Panc1 (cell line): ENCODE measurements at regions of chr2 and their contacts with region 1.

Region 1: DNA sequence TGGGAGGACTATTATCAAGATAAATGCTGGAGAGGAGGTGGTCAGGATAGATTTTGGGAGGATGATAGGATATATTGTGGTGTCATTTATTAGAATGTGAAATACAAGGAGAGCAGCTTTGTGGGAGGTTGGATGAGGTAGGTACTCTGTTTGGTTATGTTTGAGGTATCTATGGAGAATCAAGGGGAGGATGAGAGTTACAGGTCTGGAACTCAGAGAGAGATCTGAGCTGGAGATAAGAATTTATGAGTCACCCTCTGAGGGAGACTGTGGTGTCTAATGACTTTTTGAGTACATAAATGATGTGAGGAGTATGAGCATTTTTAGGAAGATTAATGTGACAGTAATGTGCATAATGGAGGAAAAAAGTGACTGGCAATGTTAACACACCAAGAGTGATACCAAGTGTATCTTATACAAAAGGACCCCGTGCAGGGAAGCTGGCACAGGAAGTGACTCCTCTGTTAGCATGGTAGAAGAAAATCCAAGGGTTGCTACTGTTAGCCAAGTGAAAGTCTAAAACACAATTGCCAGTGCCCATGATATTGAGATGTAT is 48.2 kb downstream of the CRIM1 start:
- DNase-seq: peak; percentile 93
- ATAC-seq: peak; percentile 82
- H3K4me3 ChIP-seq: peak overlapping the region in 1 of 2 experiments; percentile 4; a peak in 2 of 4 replicates
- H3K27ac ChIP-seq: peak overlapping the region; percentile 96
- H3K4me1 ChIP-seq: peaks cover 100% of the 10 kb centered on the region
- H3K27me3 ChIP-seq: no peaks in the 10 kb centered on the region
- CTCF ChIP-seq: no peak

Region 2: GRCh38 chr2:36362291-36362690 is 41.5 kb before region 1 on chr2:
- CTCF ChIA-PET with region 1: no interaction called
- POLR2A ChIA-PET with region 1: interaction called, 11 read pairs
- in situ Hi-C with region 1: no loop called
- intact Hi-C with region 1: loop called (anchors 5 kb)
- DNase-seq: no peak
- ATAC-seq: no peak
- H3K4me3 ChIP-seq: peak overlapping the region in 1 of 2 experiments; percentile 10; a peak in 2 of 4 replicates
- H3K27ac ChIP-seq: peak overlapping the region; percentile 98
- H3K4me1 ChIP-seq: peaks cover 82% of the 10 kb centered on the region
- H3K27me3 ChIP-seq: no peaks in the 10 kb centered on the region
- CTCF ChIP-seq: no peak

Region 3: GRCh38 chr2:36373149-36373926 is 30.4 kb before region 1 on chr2:
- CTCF ChIA-PET with region 1: no interaction called
- POLR2A ChIA-PET with region 1: interaction called, 4 read pairs
- in situ Hi-C with region 1: no loop called
- intact Hi-C with region 1: loop called (anchors 5 kb)
- DNase-seq: no peak
- ATAC-seq: 0 out of 2 replicates have a peak, but pooled peaks have one; percentile 8
- H3K4me3 ChIP-seq: peak overlapping the region; percentile 3 to 50; a peak in 3 of 4 replicates
- H3K27ac ChIP-seq: peak overlapping the region; percentile 98
- H3K4me1 ChIP-seq: peaks cover 98% of the 10 kb centered on the region
- H3K27me3 ChIP-seq: no peaks in the 10 kb centered on the region
- CTCF ChIP-seq: no peak

Region 4: DNA sequence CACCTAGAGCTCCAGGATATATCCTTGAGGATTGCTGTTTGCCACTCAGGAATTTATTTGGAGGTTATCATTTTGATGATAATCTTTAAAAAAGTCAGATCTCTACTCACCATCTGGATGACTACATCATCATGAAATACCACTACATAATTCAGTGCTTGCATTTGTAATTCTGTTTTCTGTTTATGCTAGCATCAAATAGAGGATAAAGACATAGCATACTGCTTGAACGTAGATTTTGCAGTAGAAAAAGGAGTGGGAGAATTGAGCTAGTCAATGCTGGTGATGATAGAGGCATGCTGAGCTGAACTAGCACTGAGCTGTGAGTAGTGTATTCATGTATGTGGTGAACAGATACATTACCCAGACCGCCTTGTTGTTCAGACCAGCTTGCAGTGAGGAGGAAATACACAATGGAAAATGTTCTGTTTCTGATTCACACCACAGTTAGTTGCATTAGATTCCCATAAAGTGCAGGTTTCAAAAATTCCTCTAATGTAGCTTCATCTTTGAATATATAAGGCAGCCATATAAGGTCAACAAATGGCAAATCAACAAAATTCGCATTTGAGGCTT is 1336.5 kb after region 1 on chr2:
- CTCF ChIA-PET with region 1: no interaction called
- POLR2A ChIA-PET with region 1: no interaction called
- in situ Hi-C with region 1: no loop called
- intact Hi-C with region 1: no loop called
- DNase-seq: no peak
- ATAC-seq: no peak
- H3K4me3 ChIP-seq: no peak overlapping the region
- H3K27ac ChIP-seq: no peak overlapping the region
- H3K4me1 ChIP-seq: no peaks in the 10 kb centered on the region
- H3K27me3 ChIP-seq: no peaks in the 10 kb centered on the region
- CTCF ChIP-seq: no peak